Naive thymus-derived CD4-positive, alpha-beta T cell (primary cell): ENCODE measurements at regions of chr18 and their contacts with region 1.

Region 1: GRCh38 chr18:22933206-22933957 is at the start of gene RBBP8:
- DNase-seq: peak; percentile 60 to 92 (median 81)
- ATAC-seq: peak; percentile 84
- H3K4me3 ChIP-seq: peak within 1 kb of the TSS; percentile 92
- H3K4me3 Mint-ChIP-seq: peak within 1 kb of the TSS; percentile 84 to 97 (median 92)
- H3K27ac ChIP-seq: peak within 1 kb of the TSS; percentile 86
- H3K27ac Mint-ChIP-seq: peak within 1 kb of the TSS in 8 of 9 donors; percentile 76 to 95 (median 89)
- H3K4me1 ChIP-seq: no peaks in the 10 kb centered on the region
- H3K4me1 Mint-ChIP-seq: peaks cover 7 to 37% (median 12%) of the 10 kb centered on the region in 7 donors
- H3K27me3 ChIP-seq: no peaks in the 10 kb centered on the region
- H3K27me3 Mint-ChIP-seq: peaks cover 0 to 5% (median 0%) of the 10 kb centered on the region in 5 donors
- total RNA-seq, gene RBBP8: 1.5 to 55.8 (median 2.5) TPM

Region 2: DNA sequence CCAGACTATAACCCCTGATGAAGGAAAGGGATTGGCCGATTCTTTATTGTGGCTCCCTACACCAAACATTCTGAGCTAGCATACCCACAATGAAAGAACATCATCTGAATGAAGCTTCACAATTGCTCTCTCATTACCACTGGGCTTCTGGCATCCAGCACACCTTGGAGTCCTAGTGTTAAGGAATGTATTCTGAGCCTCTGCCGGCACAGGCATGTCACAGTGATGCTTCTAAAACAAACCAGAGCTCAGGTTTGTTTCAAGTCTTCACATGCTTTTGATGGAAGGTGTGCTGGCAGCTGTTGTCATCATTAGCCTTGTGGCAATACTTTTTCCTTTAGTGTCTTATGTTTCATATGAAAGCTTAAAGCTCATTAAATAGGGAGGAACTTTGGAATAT is 76.5 kb before region 1 on chr18:
- CTCF ChIA-PET with region 1: no interaction called
- POLR2A ChIA-PET with region 1: no interaction called
- intact Hi-C with region 1: no loop called
- DNase-seq: no peak
- ATAC-seq: no peak
- H3K4me3 ChIP-seq: no peak overlapping the region
- H3K4me3 Mint-ChIP-seq: no peak overlapping the region
- H3K27ac ChIP-seq: no peak overlapping the region
- H3K27ac Mint-ChIP-seq: no peak overlapping the region
- H3K4me1 ChIP-seq: no peaks in the 10 kb centered on the region
- H3K4me1 Mint-ChIP-seq: no peaks in the 10 kb centered on the region
- H3K27me3 ChIP-seq: no peaks in the 10 kb centered on the region
- H3K27me3 Mint-ChIP-seq: peaks cover 35 to 71% (median 69%) of the 10 kb centered on the region in 5 donors

Region 3: DNA sequence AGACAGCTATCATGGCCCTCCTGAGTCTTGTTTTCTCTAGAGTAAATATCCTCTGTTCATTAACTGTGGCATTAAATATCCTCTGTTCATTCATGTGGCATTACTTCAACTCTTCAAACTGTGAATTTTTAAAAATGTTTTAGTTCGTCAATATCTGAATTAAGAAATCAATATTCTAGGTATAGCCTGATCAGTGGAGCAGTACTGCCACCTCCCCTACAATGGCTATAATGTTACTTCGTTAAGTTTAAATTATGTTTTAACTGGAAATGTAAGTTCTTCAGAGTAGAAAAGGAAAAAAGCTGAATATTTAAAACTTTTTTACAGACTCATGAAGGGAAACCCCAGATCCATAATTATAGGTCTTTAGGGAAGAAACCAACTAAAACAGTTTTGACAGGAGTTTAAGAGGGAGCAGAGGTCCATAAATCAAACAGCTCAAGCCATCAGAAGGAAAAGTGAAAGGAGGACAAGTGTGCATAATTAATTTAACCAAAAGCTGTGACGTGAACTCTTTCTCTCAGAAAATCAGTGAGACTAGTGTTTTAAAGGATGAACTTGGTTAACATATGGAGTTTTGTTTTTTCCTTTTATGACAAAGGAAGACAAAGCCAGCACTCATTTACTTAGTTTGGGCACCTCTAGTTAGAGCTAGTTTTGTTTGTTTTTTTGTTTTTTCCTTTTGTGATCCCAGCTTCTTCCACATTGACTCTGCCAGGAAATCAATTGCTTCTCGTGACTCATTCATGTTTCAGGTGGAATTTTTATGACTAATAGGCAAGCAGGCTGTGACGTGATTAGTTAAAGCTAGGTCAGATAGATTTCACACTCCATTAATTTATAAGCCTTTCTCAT is 44.7 kb after region 1 on chr18:
- CTCF ChIA-PET with region 1: interaction called, 60 read pairs
- POLR2A ChIA-PET with region 1: no interaction called
- intact Hi-C with region 1: loop called (anchors 1 kb)
- DNase-seq: no peak
- ATAC-seq: no peak
- H3K4me3 ChIP-seq: no peak overlapping the region
- H3K4me3 Mint-ChIP-seq: peak overlapping the region in 1 of 10 donors; percentile 2
- H3K27ac ChIP-seq: no peak overlapping the region
- H3K27ac Mint-ChIP-seq: peak overlapping the region in 1 of 9 donors; percentile 51
- H3K4me1 ChIP-seq: no peaks in the 10 kb centered on the region
- H3K4me1 Mint-ChIP-seq: peaks cover 0 to 13% (median 0%) of the 10 kb centered on the region in 7 donors
- H3K27me3 ChIP-seq: no peaks in the 10 kb centered on the region
- H3K27me3 Mint-ChIP-seq: no peaks in the 10 kb centered on the region

Region 4: DNA sequence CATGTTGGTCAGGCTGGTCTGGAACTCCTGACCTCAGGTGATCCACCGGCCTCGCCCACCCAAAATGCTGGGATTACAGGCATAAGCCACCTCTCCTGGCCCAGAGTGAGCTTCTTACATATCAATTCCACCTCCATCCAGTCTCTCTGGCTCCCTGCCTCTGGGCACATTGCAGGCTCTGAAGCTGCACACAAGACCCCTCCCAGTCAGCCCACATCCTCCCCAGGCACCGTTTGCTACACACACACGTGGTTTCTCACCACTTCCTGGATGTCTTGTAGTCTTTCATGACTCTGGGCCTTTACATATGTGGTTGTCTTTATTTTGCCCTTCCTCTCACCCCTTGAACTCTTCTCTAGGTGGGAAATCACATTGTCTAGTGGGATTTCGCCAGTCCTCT is 137.9 kb after region 1 on chr18:
- CTCF ChIA-PET with region 1: no interaction called
- POLR2A ChIA-PET with region 1: no interaction called
- intact Hi-C with region 1: loop called (anchors 1 kb)
- DNase-seq: peak; percentile 49 to 94 (median 92)
- ATAC-seq: peak; percentile 99
- H3K4me3 ChIP-seq: peak overlapping the region; percentile 12
- H3K4me3 Mint-ChIP-seq: peak overlapping the region; percentile 73 to 91 (median 78)
- H3K27ac ChIP-seq: peak overlapping the region; percentile 18
- H3K27ac Mint-ChIP-seq: peak overlapping the region; percentile 69 to 94 (median 91)
- H3K4me1 ChIP-seq: peaks cover 44 to 50% of the 10 kb centered on the region in 2 donors
- H3K4me1 Mint-ChIP-seq: peaks cover 46 to 83% (median 77%) of the 10 kb centered on the region in 7 donors
- H3K27me3 ChIP-seq: no peaks in the 10 kb centered on the region
- H3K27me3 Mint-ChIP-seq: peaks cover 0 to 3% (median 0%) of the 10 kb centered on the region in 5 donors

Region 5: GRCh38 chr18:23356915-23357601 is 423.7 kb after region 1 on chr18:
- CTCF ChIA-PET with region 1: interaction called, 5 read pairs
- POLR2A ChIA-PET with region 1: no interaction called
- intact Hi-C with region 1: loop called (anchors 1 kb)
- DNase-seq: no peak
- ATAC-seq: no peak
- H3K4me3 ChIP-seq: no peak overlapping the region
- H3K4me3 Mint-ChIP-seq: no peak overlapping the region
- H3K27ac ChIP-seq: no peak overlapping the region
- H3K27ac Mint-ChIP-seq: no peak overlapping the region
- H3K4me1 ChIP-seq: peaks cover 0 to 7% of the 10 kb centered on the region in 2 donors
- H3K4me1 Mint-ChIP-seq: peaks cover 5 to 21% (median 12%) of the 10 kb centered on the region in 7 donors
- H3K27me3 ChIP-seq: no peaks in the 10 kb centered on the region
- H3K27me3 Mint-ChIP-seq: no peaks in the 10 kb centered on the region

Region 6: GRCh38 chr18:23452728-23453679 is 519.6 kb after region 1 on chr18 and contains the start of gene RIOK3:
- CTCF ChIA-PET with region 1: no interaction called
- POLR2A ChIA-PET with region 1: no interaction called
- intact Hi-C with region 1: loop called in 1 of 2 experiments (anchors 1 kb)
- DNase-seq: peak; percentile 68 to 96 (median 74)
- ATAC-seq: peak; percentile 97
- H3K4me3 ChIP-seq: peak within 1 kb of the TSS; percentile 82
- H3K4me3 Mint-ChIP-seq: peak within 1 kb of the TSS; percentile 92 to 100 (median 98)
- H3K27ac ChIP-seq: peak within 1 kb of the TSS; percentile 90
- H3K27ac Mint-ChIP-seq: peak within 1 kb of the TSS; percentile 91 to 99 (median 96)
- H3K4me1 ChIP-seq: peaks cover 13 to 25% of the 10 kb centered on the region in 2 donors
- H3K4me1 Mint-ChIP-seq: peaks cover 22 to 55% (median 47%) of the 10 kb centered on the region in 7 donors
- H3K27me3 ChIP-seq: no peaks in the 10 kb centered on the region
- H3K27me3 Mint-ChIP-seq: peaks cover 0 to 7% (median 0%) of the 10 kb centered on the region in 5 donors
- total RNA-seq, gene RIOK3: 74.0 to 153 (median 78.2) TPM

Region 7: GRCh38 chr18:24426398-24427294 is 1493.3 kb after region 1 on chr18 and contains the start of gene IMPACT:
- CTCF ChIA-PET with region 1: no interaction called
- POLR2A ChIA-PET with region 1: no interaction called
- intact Hi-C with region 1: loop called in 1 of 2 experiments (anchors 10 kb)
- DNase-seq: peak; percentile 50 to 87 (median 77)
- ATAC-seq: peak; percentile 95
- H3K4me3 ChIP-seq: peak within 1 kb of the TSS; percentile 70
- H3K4me3 Mint-ChIP-seq: peak within 1 kb of the TSS; percentile 86 to 93 (median 91)
- H3K27ac ChIP-seq: peak within 1 kb of the TSS; percentile 68
- H3K27ac Mint-ChIP-seq: peak within 1 kb of the TSS; percentile 73 to 92 (median 88)
- H3K4me1 ChIP-seq: peaks cover 6 to 11% of the 10 kb centered on the region in 2 donors
- H3K4me1 Mint-ChIP-seq: peaks cover 10 to 32% (median 25%) of the 10 kb centered on the region in 7 donors
- H3K27me3 ChIP-seq: no peaks in the 10 kb centered on the region
- H3K27me3 Mint-ChIP-seq: peaks cover 22 to 35% (median 28%) of the 10 kb centered on the region in 5 donors
- total RNA-seq, gene IMPACT: 7.8 to 17.5 (median 15.5) TPM